ENCODE measurements at regions of chr22 and their contacts with region 1.

Region 1: GRCh38 chr22:23289851-23290724 is 109.8 kb downstream of the BCR start:
- DNase-seq: no peak
- H3K4me3 ChIP-seq: no peak overlapping the region
- H3K27ac ChIP-seq: no peak overlapping the region
- H3K27me3 ChIP-seq: no peaks in the 10 kb centered on the region
- CTCF ChIP-seq: peak; percentile 89

Region 2: GRCh38 chr22:23305922-23306374 is 15.9 kb after region 1 on chr22:
- CTCF ChIA-PET with region 1: interaction called, 10 read pairs
- POLR2A ChIA-PET with region 1: no interaction called
- DNase-seq: no peak
- H3K4me3 ChIP-seq: no peak overlapping the region; the same call in 1 of the 2 replicates
- H3K27ac ChIP-seq: peak overlapping the region; percentile 86
- H3K27me3 ChIP-seq: no peaks in the 10 kb centered on the region
- CTCF ChIP-seq: no peak

Measured in AG04450 (cell line).